K562 (cell line): ENCODE measurements at regions of chr7 and their contacts with region 1.

Region 1: DNA sequence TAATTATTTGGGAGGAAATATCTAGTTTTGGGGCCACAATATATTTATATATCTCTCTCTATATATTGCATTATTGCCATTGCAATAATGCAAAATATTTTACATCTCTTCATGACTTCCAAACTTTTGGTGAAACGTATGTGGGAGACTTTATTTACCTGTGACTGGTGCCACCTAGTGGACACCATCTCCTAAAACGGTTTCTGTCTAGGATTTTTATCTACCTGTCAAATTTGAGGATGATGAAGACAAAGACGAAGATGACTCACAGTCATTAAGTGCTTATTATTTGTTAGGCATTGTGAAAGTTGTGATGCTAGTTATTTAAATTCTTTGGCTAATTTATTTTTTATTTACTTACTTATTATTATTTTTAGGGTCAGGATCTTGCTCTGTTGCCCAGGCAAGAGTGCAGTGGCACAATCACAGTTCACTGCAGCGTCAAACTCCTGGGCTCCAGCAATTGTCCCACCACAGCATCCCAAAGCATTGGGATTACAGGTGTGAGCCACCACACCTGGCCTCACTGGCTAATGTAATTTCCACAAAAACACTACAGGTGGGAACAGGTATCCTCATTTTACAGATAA is 18.7 kb upstream of the CBLL1 start:
- DNase-seq: peak; percentile 63 to 83 (median 70)
- ATAC-seq: peak; percentile 75
- H3K4me3 ChIP-seq: no peak overlapping the region
- H3K27ac ChIP-seq: no peak overlapping the region
- H3K4me1 ChIP-seq: peaks cover 0 to 6% of the 10 kb centered on the region in 2 experiments; a peak in 1 of 5 replicates
- H3K27me3 ChIP-seq: no peaks in the 10 kb centered on the region
- CTCF ChIP-seq: peak; percentile 56 to 91 (median 79); a peak in 5 of 6 replicates
- EP300 ChIP-seq: no peak
- POLR2A ChIP-seq: no peak
- RAD21 ChIP-seq: peak; percentile 94 to 95

Region 2: DNA sequence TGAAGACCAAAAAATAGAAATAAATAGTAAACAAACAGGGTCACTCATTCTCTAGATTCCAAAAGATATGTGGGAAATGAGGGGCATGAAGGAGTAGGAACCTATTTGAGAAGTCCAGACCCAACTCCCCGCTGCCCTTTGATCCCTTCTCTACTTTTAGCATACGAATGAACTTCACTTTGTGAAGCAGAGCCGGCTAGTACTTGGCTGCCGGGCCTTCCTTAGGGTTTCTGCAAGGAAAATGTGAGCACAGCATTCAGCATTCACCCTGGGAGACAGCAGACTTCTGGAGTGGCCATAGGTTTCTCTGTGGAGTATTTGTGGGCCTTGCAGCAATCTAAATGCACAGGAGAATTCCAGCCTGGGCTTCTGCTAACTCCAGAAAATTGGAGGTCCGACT is 757.1 kb before region 1 on chr7:
- CTCF ChIA-PET with region 1: no interaction called
- POLR2A ChIA-PET with region 1: no interaction called
- in situ Hi-C with region 1: no loop called
- intact Hi-C with region 1: no loop called
- DNase-seq: no peak
- ATAC-seq: no peak
- H3K4me3 ChIP-seq: no peak overlapping the region
- H3K27ac ChIP-seq: no peak overlapping the region
- H3K4me1 ChIP-seq: peaks cover 11 to 14% of the 10 kb centered on the region in 2 experiments; a peak in 4 of 5 replicates
- H3K27me3 ChIP-seq: no peaks in the 10 kb centered on the region
- CTCF ChIP-seq: no peak
- EP300 ChIP-seq: no peak
- POLR2A ChIP-seq: no peak
- RAD21 ChIP-seq: no peak

Region 3: GRCh38 chr7:107194049-107194448 is 531.2 kb before region 1 on chr7:
- CTCF ChIA-PET with region 1: no interaction called
- POLR2A ChIA-PET with region 1: no interaction called
- in situ Hi-C with region 1: loop called (anchors 10 kb)
- intact Hi-C with region 1: no loop called
- DNase-seq: no peak
- ATAC-seq: no peak
- H3K4me3 ChIP-seq: no peak overlapping the region
- H3K27ac ChIP-seq: no peak overlapping the region
- H3K4me1 ChIP-seq: no peaks in the 10 kb centered on the region
- H3K27me3 ChIP-seq: no peaks in the 10 kb centered on the region
- CTCF ChIP-seq: peak in 1 of 3 experiments; percentile 24; a peak in 1 of 6 replicates
- EP300 ChIP-seq: no peak
- POLR2A ChIP-seq: 0 out of 2 replicates have a peak, but pooled peaks have one; percentile 36
- RAD21 ChIP-seq: peak in 1 of 2 experiments; percentile 28; a peak in 2 of 4 replicates

Region 4: GRCh38 chr7:107201795-107202450 is 523.3 kb before region 1 on chr7:
- CTCF ChIA-PET with region 1: interaction called, 14 read pairs
- POLR2A ChIA-PET with region 1: no interaction called
- in situ Hi-C with region 1: loop called (anchors 10 kb)
- intact Hi-C with region 1: loop called (anchors 1 kb)
- DNase-seq: peak; percentile 59 to 68 (median 64)
- ATAC-seq: peak; percentile 90
- H3K4me3 ChIP-seq: no peak overlapping the region
- H3K27ac ChIP-seq: no peak overlapping the region
- H3K4me1 ChIP-seq: peaks cover 0 to 5% of the 10 kb centered on the region in 2 experiments; a peak in 1 of 5 replicates
- H3K27me3 ChIP-seq: no peaks in the 10 kb centered on the region
- CTCF ChIP-seq: peak; percentile 77 to 84 (median 80)
- EP300 ChIP-seq: no peak
- POLR2A ChIP-seq: no peak
- RAD21 ChIP-seq: peak; percentile 73 to 80

Region 5: GRCh38 chr7:107462740-107463444 is 262.4 kb before region 1 on chr7:
- CTCF ChIA-PET with region 1: interaction called, 25 read pairs
- POLR2A ChIA-PET with region 1: interaction called, 3 read pairs
- in situ Hi-C with region 1: no loop called
- intact Hi-C with region 1: loop called (anchors 1 kb)
- DNase-seq: peak; percentile 20 to 77 (median 38)
- ATAC-seq: peak; percentile 92
- H3K4me3 ChIP-seq: no peak overlapping the region
- H3K27ac ChIP-seq: no peak overlapping the region
- H3K4me1 ChIP-seq: no peaks in the 10 kb centered on the region
- H3K27me3 ChIP-seq: no peaks in the 10 kb centered on the region
- CTCF ChIP-seq: peak; percentile 77 to 97 (median 82)
- EP300 ChIP-seq: 0 out of 2 replicates have a peak, but pooled peaks have one; percentile 24
- POLR2A ChIP-seq: no peak
- RAD21 ChIP-seq: peak; percentile 94 to 97

Region 6: DNA sequence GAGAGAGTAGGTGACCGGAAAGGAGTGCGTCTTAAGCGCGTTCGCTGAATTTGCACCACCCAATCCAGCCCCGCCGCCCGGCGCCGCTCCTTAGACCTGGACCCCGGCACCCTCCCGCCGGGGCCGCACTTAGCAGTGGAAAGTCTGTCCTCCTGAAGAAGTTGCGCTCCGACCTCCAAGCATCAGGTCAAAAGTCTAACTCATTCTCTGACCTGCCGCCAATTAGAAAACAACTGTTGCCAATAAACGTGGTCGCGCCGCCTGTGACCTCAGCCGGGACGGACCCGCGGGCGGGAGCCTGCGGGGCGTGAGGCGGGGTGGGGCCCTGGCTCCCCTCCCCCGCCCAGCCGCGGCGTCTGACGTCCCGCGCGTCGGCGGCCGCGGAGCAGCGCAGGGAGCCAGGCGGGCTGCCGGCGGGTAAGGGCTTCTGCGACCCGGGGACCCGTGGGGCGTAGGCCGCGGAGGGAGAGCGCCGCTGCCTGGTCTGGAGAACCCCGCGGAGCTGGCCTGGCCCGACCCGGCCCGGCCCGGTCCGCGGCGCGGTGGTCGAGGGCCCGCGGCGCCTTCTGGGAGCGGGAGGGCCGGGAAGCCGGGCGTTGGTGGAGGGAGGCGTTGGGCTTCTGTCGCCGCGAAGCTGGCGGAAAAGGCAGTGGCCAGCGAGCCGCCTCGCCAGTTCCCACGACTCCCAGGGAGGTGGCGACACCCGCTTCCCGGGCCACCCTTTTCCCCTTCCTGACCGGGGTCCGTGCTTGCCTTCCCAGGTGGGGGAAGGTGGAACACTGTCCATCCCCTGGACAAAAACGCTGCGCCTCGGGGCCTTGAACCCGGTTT is 145.1 kb before region 1 on chr7 and contains the start of gene BCAP29:
- CTCF ChIA-PET with region 1: interaction called, 9 read pairs
- POLR2A ChIA-PET with region 1: no interaction called
- in situ Hi-C with region 1: no loop called
- intact Hi-C with region 1: loop called (anchors 2 kb)
- DNase-seq: peak; percentile 94 to 95 (median 95)
- ATAC-seq: peak; percentile 94
- H3K4me3 ChIP-seq: peak within 1 kb of the TSS; percentile 62
- H3K27ac ChIP-seq: peak within 1 kb of the TSS; percentile 83
- H3K4me1 ChIP-seq: peaks cover 6 to 13% of the 10 kb centered on the region in 2 experiments; a peak in 4 of 5 replicates
- H3K27me3 ChIP-seq: no peaks in the 10 kb centered on the region
- CTCF ChIP-seq: peak; percentile 55 to 64 (median 60)
- EP300 ChIP-seq: peak; percentile 43
- POLR2A ChIP-seq: peak; percentile 92
- RAD21 ChIP-seq: peak; percentile 63 to 65
- polyA plus RNA-seq, gene BCAP29: 63.4 to 64.4 TPM

Region 7: DNA sequence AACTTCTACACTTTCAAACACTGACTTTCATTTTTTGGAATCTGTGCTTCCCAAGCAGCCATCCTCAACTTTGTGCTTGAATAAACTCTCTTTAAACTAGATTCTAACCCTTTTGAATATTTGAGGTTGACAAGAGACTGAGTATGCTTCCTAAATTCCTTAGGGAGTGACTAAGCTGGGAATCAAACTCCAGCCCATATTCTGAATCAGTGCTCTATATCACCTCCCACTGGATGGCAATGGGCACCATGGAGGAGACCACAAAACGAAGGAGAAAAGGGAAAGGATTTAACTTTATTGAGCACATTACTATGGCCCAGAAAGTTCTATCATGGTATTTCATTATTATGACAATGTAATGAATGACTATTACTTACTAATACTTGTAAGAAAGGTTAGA is 81.8 kb before region 1 on chr7:
- CTCF ChIA-PET with region 1: no interaction called
- POLR2A ChIA-PET with region 1: no interaction called
- in situ Hi-C with region 1: no loop called
- intact Hi-C with region 1: loop called (anchors 5 kb)
- DNase-seq: no peak
- ATAC-seq: peak; percentile 48; the same call in 1 of the 3 replicates
- H3K4me3 ChIP-seq: no peak overlapping the region
- H3K27ac ChIP-seq: no peak overlapping the region
- H3K4me1 ChIP-seq: no peaks in the 10 kb centered on the region
- H3K27me3 ChIP-seq: peaks cover 4 to 6% of the 10 kb centered on the region in 2 experiments; a peak in 2 of 5 replicates
- CTCF ChIP-seq: peak in 1 of 3 experiments; percentile 25; a peak in 1 of 6 replicates
- EP300 ChIP-seq: no peak
- POLR2A ChIP-seq: no peak
- RAD21 ChIP-seq: no peak